Sciatic nerve (tissue), 2 donors: ENCODE measurements at regions of chr20 and their contacts with region 1.

Region 1: DNA sequence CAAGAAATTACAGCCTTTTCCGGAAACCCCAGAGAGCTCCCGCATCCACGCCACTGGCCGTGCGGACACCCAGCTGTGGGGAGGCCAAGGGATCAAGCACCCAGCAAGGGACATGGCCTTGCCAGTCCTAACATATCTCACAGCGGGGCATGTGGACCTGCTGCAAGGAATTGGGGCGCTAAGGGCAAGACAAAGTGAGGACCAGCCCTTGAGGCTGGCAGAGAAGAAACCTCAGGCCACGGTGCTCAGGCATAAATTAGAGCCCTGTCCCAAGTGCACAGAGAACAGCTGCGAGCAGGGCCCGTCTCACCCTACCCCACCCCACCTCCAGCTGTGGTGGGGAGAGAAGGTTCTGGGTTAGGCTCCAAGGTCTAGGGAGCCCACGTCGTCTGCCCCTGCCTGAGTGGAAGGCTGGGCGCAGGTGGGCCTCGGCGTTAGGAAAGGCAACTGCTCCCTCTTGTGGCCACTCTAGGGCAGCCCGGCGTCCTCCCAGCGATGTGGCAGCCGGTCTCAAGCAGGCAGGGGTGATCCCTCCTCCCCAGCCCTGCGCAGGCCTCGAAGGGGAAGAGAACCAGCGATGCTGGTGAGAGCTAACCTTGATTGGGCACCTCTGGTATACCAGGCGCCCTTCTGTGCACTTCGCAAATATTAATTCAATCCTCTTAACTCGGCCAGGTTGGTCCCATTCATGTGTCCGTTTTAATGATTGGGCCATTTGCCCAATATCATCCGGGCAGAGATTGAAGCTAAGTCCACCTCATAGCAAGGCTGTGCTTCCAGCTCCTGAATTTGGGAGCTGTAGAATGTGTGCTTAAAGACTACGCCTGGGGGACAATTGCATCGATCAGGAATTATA is 235.8 kb downstream of the NFATC2 start:
- DNase-seq: peak; percentile 86
- ATAC-seq: peak; percentile 95

Region 2: GRCh38 chr20:50987592-50988210 is 319.0 kb before region 1 on chr20:
- intact Hi-C with region 1: loop called (anchors 5 kb)
- DNase-seq: peak; percentile 68
- ATAC-seq: peak; percentile 95

Region 3: DNA sequence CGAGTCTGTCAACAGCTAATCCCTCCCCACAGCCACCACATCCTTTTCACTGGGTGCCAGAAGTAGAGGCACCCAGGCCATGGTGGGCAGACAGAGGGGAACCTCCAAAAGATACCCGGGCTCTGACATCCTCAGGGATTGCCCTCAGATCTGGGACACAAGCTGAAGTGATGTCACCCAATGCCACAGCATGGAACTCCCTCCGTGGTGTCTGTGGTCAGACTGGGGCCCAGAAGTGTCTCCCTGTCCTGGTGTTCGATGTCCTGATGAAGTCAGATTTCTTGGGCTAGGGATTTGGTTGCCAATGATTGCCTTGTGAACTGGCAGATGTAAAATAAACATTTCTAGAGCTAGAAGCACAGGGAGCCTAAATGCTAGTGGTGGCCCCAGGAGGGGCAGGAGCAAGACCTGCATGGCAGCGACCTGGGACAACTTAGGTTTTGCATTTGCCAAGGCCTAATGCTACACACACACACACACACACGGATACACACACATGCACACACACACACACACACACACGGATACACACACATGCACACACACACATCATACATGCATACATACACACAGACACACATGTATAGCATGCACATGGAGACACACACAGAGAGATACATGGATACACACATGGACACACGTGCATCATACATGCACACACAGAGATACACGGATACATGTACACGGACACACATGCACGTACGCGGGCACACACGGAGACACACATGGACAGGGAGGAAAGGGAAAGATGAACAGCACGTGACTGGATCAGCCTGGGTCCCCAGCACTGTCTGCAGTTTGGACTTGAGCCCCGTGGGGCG is 14.8 kb after region 1 on chr20:
- intact Hi-C with region 1: loop called (anchors 1 kb)
- DNase-seq: no peak
- ATAC-seq: no peak

Region 4: GRCh38 chr20:51760905-51761546 is 454.3 kb after region 1 on chr20:
- intact Hi-C with region 1: no loop called
- DNase-seq: no peak
- ATAC-seq: no peak